ENCODE measurements at regions of chr11 and their contacts with region 1.

Region 1: GRCh38 chr11:73625696-73626318 is 20.6 kb upstream of the PLEKHB1 start:
- DNase-seq: peak; percentile 23
- ATAC-seq: peak; percentile 98
- H3K4me3 ChIP-seq: no peak overlapping the region
- H3K27ac ChIP-seq: no peak overlapping the region
- H3K4me1 ChIP-seq: no peaks in the 10 kb centered on the region
- H3K27me3 ChIP-seq: no peaks in the 10 kb centered on the region
- CTCF ChIP-seq: peak; percentile 83 to 91 (median 84)
- EP300 ChIP-seq: no peak
- POLR2A ChIP-seq: no peak
- RAD21 ChIP-seq: peak; percentile 82

Region 2: GRCh38 chr11:73288873-73289707 is 336.7 kb before region 1 on chr11:
- CTCF ChIA-PET with region 1: no interaction called
- POLR2A ChIA-PET with region 1: no interaction called
- RAD21 ChIA-PET with region 1: no interaction called
- SMC1A ChIA-PET with region 1: no interaction called
- in situ Hi-C with region 1: no loop called
- intact Hi-C with region 1: no loop called
- DNase-seq: peak; percentile 70
- ATAC-seq: peak; percentile 95
- H3K4me3 ChIP-seq: 0 out of 2 replicates have a peak overlapping the region, but pooled peaks have one; percentile 9
- H3K27ac ChIP-seq: peak overlapping the region; percentile 49
- H3K4me1 ChIP-seq: peaks cover 23% of the 10 kb centered on the region
- H3K27me3 ChIP-seq: no peaks in the 10 kb centered on the region; a peak in 2 of 4 replicates
- CTCF ChIP-seq: peak; percentile 92 to 99 (median 97)
- EP300 ChIP-seq: 0 out of 4 replicates have a peak, but pooled peaks of 1 of the 2 experiments have one; percentile 6
- POLR2A ChIP-seq: no peak
- RAD21 ChIP-seq: peak; percentile 94

Region 3: GRCh38 chr11:73325036-73325981 is 300.5 kb before region 1 on chr11:
- CTCF ChIA-PET with region 1: no interaction called
- POLR2A ChIA-PET with region 1: no interaction called
- RAD21 ChIA-PET with region 1: no interaction called
- SMC1A ChIA-PET with region 1: no interaction called
- in situ Hi-C with region 1: no loop called
- intact Hi-C with region 1: no loop called
- DNase-seq: peak; percentile 83
- ATAC-seq: peak; percentile 83
- H3K4me3 ChIP-seq: peak overlapping the region; percentile 38; the same call in 1 of the 2 replicates
- H3K27ac ChIP-seq: peak overlapping the region; percentile 99
- H3K4me1 ChIP-seq: peaks cover 80% of the 10 kb centered on the region
- H3K27me3 ChIP-seq: no peaks in the 10 kb centered on the region
- CTCF ChIP-seq: no peak
- EP300 ChIP-seq: no peak; a peak in 2 of 4 replicates
- POLR2A ChIP-seq: peak; percentile 70
- RAD21 ChIP-seq: no peak

Region 4: DNA sequence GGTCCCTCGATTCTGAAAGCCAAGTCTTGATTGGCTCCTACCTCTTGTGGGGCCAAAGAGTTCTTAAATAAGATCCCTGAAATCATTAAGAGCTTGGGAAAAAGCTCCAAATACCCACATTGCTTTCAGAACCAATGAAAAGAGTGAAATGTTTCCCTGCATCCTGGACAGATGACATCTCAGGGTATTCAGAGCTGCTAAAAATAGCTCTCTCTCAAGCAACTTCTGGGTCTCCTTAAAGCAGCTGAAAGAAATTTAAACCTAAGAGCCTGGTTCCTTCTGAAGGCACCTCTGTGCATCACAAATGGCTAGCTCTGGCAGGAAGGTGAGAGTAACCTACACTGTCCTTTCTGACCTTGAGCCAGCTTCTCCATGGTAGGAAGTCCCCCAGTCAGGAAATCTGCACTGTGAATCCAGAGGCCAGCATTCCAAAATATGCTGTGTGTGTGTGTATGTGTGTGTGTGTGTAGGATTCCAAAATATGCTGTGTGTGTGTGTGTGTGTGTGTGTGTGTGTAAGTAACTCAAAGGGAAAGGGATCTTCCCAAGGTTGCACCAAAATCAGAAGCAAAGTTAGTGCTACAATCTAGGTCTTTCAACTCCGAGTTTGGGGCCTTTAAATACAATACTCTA is 199.5 kb before region 1 on chr11:
- CTCF ChIA-PET with region 1: interaction called, 10 read pairs
- POLR2A ChIA-PET with region 1: no interaction called
- RAD21 ChIA-PET with region 1: no interaction called
- SMC1A ChIA-PET with region 1: interaction called, 5 read pairs
- in situ Hi-C with region 1: no loop called
- intact Hi-C with region 1: no loop called
- DNase-seq: no peak
- ATAC-seq: no peak
- H3K4me3 ChIP-seq: no peak overlapping the region
- H3K27ac ChIP-seq: no peak overlapping the region
- H3K4me1 ChIP-seq: peaks cover 3% of the 10 kb centered on the region; the same call in 1 of the 2 replicates
- H3K27me3 ChIP-seq: no peaks in the 10 kb centered on the region
- CTCF ChIP-seq: no peak
- EP300 ChIP-seq: no peak
- POLR2A ChIP-seq: no peak
- RAD21 ChIP-seq: no peak

Region 5: DNA sequence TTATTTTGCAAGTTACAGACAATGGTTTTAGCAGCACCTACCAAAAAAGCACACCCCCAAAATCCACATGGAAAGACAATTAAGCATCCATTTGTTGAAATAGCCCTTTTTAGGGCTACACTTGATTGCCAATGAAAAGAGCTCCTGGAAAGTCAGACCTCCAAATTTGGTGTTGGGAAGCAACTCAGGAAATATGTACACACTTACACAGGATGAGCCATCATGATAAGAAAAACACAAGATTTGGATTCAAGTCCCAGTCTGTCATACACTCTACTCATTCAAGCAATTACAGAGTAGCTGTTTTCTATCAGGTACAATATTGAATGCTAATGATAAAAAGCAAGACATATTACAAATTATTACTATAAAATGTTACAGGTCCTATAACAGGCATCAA is 59.4 kb before region 1 on chr11:
- CTCF ChIA-PET with region 1: interaction called, 18 read pairs
- POLR2A ChIA-PET with region 1: interaction called, 6 read pairs
- RAD21 ChIA-PET with region 1: no interaction called
- SMC1A ChIA-PET with region 1: interaction called, 10 read pairs
- in situ Hi-C with region 1: no loop called
- intact Hi-C with region 1: no loop called
- DNase-seq: no peak
- ATAC-seq: no peak
- H3K4me3 ChIP-seq: no peak overlapping the region
- H3K27ac ChIP-seq: no peak overlapping the region
- H3K4me1 ChIP-seq: peaks cover 5% of the 10 kb centered on the region; the same call in 1 of the 2 replicates
- H3K27me3 ChIP-seq: no peaks in the 10 kb centered on the region
- CTCF ChIP-seq: no peak
- EP300 ChIP-seq: no peak
- POLR2A ChIP-seq: no peak
- RAD21 ChIP-seq: no peak

Region 6: GRCh38 chr11:73590991-73591390 is 34.8 kb before region 1 on chr11:
- CTCF ChIA-PET with region 1: interaction called, 10 read pairs
- POLR2A ChIA-PET with region 1: no interaction called
- RAD21 ChIA-PET with region 1: interaction called, 3 read pairs
- SMC1A ChIA-PET with region 1: interaction called, 4 read pairs
- in situ Hi-C with region 1: no loop called
- intact Hi-C with region 1: no loop called
- DNase-seq: no peak
- ATAC-seq: no peak
- H3K4me3 ChIP-seq: no peak overlapping the region
- H3K27ac ChIP-seq: no peak overlapping the region
- H3K4me1 ChIP-seq: no peaks in the 10 kb centered on the region
- H3K27me3 ChIP-seq: no peaks in the 10 kb centered on the region
- CTCF ChIP-seq: no peak
- EP300 ChIP-seq: no peak
- POLR2A ChIP-seq: no peak
- RAD21 ChIP-seq: no peak

Region 7: GRCh38 chr11:73647459-73648100 is 21.8 kb after region 1 on chr11:
- CTCF ChIA-PET with region 1: interaction called, 15 read pairs
- POLR2A ChIA-PET with region 1: no interaction called
- RAD21 ChIA-PET with region 1: interaction called, 4 read pairs
- SMC1A ChIA-PET with region 1: interaction called, 14 read pairs
- in situ Hi-C with region 1: no loop called
- intact Hi-C with region 1: no loop called
- DNase-seq: peak; percentile 40
- ATAC-seq: peak; percentile 100
- H3K4me3 ChIP-seq: peak overlapping the region; percentile 8; the same call in 1 of the 2 replicates
- H3K27ac ChIP-seq: no peak overlapping the region
- H3K4me1 ChIP-seq: no peaks in the 10 kb centered on the region
- H3K27me3 ChIP-seq: no peaks in the 10 kb centered on the region
- CTCF ChIP-seq: no peak
- EP300 ChIP-seq: no peak
- POLR2A ChIP-seq: no peak
- RAD21 ChIP-seq: no peak

Region 8: GRCh38 chr11:73661035-73661628 is 35.3 kb after region 1 on chr11:
- CTCF ChIA-PET with region 1: interaction called, 173 read pairs
- POLR2A ChIA-PET with region 1: interaction called, 4 read pairs
- RAD21 ChIA-PET with region 1: interaction called, 64 read pairs
- SMC1A ChIA-PET with region 1: interaction called, 79 read pairs
- in situ Hi-C with region 1: no loop called
- intact Hi-C with region 1: loop called (anchors 1 kb)
- DNase-seq: peak; percentile 37
- ATAC-seq: peak; percentile 98
- H3K4me3 ChIP-seq: no peak overlapping the region; the same call in 1 of the 2 replicates
- H3K27ac ChIP-seq: no peak overlapping the region
- H3K4me1 ChIP-seq: no peaks in the 10 kb centered on the region
- H3K27me3 ChIP-seq: no peaks in the 10 kb centered on the region
- CTCF ChIP-seq: peak; percentile 96 to 99 (median 98)
- EP300 ChIP-seq: no peak
- POLR2A ChIP-seq: no peak
- RAD21 ChIP-seq: peak; percentile 98